ENCODE measurements at regions of chr7 and their contacts with region 1.

Region 1: GRCh38 chr7:108002726-108003598 is at the start of gene LAMB1:
- DNase-seq: peak; percentile 69
- ATAC-seq: peak; percentile 64
- H3K4me3 ChIP-seq: peak within 1 kb of the TSS; percentile 87
- H3K27ac ChIP-seq: peak within 1 kb of the TSS; percentile 71
- H3K4me1 ChIP-seq: peaks cover 53% of the 10 kb centered on the region
- H3K27me3 ChIP-seq: no peaks in the 10 kb centered on the region
- CTCF ChIP-seq: no peak
- total RNA-seq, gene LAMB1: 74.3 and 101 TPM in 2 replicates

Region 2: GRCh38 chr7:107758667-107759066 is 244.3 kb before region 1 on chr7:
- CTCF ChIA-PET with region 1: no interaction called
- POLR2A ChIA-PET with region 1: no interaction called
- intact Hi-C with region 1: no loop called
- DNase-seq: no peak
- ATAC-seq: no peak
- H3K4me3 ChIP-seq: no peak overlapping the region
- H3K27ac ChIP-seq: no peak overlapping the region
- H3K4me1 ChIP-seq: no peaks in the 10 kb centered on the region
- H3K27me3 ChIP-seq: no peaks in the 10 kb centered on the region
- CTCF ChIP-seq: no peak

Region 3: GRCh38 chr7:107799647-107800264 is 203.2 kb before region 1 on chr7:
- CTCF ChIA-PET with region 1: no interaction called
- POLR2A ChIA-PET with region 1: no interaction called
- intact Hi-C with region 1: no loop called
- DNase-seq: no peak
- ATAC-seq: no peak
- H3K4me3 ChIP-seq: no peak overlapping the region
- H3K27ac ChIP-seq: no peak overlapping the region
- H3K4me1 ChIP-seq: no peaks in the 10 kb centered on the region
- H3K27me3 ChIP-seq: peaks cover 32% of the 10 kb centered on the region
- CTCF ChIP-seq: no peak

Region 4: DNA sequence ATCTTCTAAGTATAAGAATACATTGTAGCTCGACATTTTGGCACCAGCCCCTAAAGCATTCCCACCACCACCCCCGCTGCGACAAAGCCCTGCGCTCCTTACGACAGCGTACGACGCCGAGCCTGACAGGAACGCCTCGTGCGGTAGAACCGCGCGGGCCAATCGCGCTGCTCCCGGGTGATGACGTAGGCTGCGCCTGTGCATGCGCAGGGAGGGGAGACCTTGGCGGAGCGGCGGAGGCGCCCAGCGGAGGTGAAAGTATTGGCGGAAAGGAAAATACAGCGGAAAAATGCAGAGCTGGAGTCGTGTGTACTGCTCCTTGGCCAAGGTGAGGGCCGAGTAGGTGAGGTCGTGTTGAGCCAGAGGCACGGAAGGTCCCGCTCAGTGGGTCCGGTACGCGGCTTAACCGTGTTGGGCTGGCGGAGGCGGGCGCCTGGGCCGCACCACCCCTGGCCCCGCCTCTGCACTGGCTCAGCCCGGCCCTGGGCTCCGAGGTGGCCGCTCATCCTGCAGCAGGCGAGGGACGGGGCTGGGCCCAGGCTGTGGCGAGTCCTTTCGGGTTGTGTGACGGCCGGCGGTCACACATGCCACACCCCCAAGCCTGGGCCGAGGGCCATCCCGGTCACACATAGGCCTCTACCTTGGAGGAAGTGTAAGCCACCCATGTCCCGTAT is 111.9 kb before region 1 on chr7 and contains the start of gene DLD:
- CTCF ChIA-PET with region 1: no interaction called
- POLR2A ChIA-PET with region 1: no interaction called
- intact Hi-C with region 1: loop called (anchors 5 kb)
- DNase-seq: peak; percentile 93
- ATAC-seq: peak; percentile 96
- H3K4me3 ChIP-seq: peak within 1 kb of the TSS; percentile 81
- H3K27ac ChIP-seq: peak within 1 kb of the TSS; percentile 71
- H3K4me1 ChIP-seq: peaks cover 31% of the 10 kb centered on the region
- H3K27me3 ChIP-seq: no peaks in the 10 kb centered on the region
- CTCF ChIP-seq: no peak
- total RNA-seq, gene DLD: 53.6 and 64.0 TPM in 2 replicates

Region 5: DNA sequence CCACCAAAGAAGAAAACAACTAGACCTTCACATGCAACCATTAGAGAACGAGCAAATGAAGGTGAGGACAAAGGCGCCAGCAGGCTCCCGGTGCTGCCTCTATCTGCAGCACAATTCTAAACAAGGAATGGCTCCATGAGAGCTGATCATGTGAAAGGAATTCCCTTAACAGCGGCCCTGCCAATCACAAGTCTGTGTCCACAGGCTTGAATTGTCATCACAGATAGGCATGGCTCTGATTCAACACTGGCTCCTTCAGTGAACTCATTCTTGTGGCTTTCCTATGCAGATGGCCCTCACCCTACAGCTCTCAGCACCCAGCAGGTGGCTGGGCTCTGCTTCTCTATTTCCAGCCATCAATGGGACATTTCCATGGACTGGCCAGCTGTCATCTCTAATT is 36.3 kb before region 1 on chr7:
- CTCF ChIA-PET with region 1: no interaction called
- POLR2A ChIA-PET with region 1: no interaction called
- intact Hi-C with region 1: loop called (anchors 1 kb)
- DNase-seq: peak; percentile 89
- ATAC-seq: peak; percentile 87
- H3K4me3 ChIP-seq: no peak overlapping the region
- H3K27ac ChIP-seq: peak overlapping the region; percentile 61
- H3K4me1 ChIP-seq: peaks cover 26% of the 10 kb centered on the region
- H3K27me3 ChIP-seq: no peaks in the 10 kb centered on the region
- CTCF ChIP-seq: no peak

Measured in PC-3 (cell line).